ENCODE measurements at regions of chr6 and their contacts with region 1.

Region 1: GRCh38 chr6:30453508-30454116 is 35.7 kb upstream of the HLA-E start:
- DNase-seq: peak; percentile 81
- H3K4me3 Mint-ChIP-seq: no peak overlapping the region
- H3K27ac Mint-ChIP-seq: no peak overlapping the region
- H3K4me1 Mint-ChIP-seq: peaks cover 30% of the 10 kb centered on the region
- H3K27me3 Mint-ChIP-seq: peaks cover 87% of the 10 kb centered on the region

Region 2: DNA sequence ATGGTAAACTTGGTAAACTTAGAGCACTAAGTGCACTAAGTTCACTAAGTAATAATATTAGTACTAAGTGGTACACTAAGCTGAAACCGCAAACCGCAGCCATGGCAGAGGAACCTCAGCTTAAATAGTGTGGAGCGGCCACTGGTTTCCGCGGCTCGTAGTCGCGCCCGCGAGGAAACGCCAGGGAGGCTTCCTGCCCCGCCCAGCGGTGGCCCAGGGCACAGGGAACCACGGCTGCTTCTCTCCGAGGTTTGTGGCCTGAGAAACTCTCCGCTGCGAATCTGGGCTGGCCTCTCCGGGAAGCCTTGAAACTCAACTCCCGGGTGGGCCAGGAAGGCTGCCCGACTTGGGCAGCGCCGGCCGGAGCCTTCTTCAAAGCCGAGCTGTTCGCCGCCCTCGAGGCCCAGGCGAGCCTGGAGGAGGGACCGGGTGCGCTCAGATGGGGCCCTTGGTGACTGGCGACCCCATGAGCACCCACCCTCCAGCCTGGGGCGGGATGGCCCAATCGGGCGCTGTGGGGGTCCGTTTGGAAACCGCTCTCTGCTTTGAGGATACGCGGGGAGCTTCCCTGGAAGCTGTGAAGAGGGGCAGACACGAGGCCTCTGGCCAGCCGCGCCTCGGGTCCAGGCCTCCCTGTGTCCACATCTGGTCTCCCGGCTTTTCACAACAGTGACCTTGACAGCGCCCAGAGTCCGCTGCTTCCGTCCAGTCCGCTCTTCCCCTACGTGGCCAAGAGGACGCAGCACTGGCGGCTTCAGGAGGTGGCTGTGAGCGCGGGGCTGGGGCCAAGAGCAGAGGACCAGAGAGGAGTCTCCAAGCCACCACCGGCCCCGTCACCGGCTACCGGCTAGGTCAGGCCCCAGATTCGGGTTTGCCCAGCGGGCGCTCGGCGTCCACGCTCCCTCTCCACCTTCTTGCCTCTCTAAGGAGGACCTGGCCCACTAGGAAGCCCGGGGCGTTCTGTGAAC is 10.3 kb after region 1 on chr6:
- CTCF ChIA-PET with region 1: interaction called, 18 read pairs
- POLR2A ChIA-PET with region 1: interaction called, 27 read pairs
- DNase-seq: peak; percentile 83
- H3K4me3 Mint-ChIP-seq: no peak overlapping the region
- H3K27ac Mint-ChIP-seq: no peak overlapping the region
- H3K4me1 Mint-ChIP-seq: peaks cover 37% of the 10 kb centered on the region
- H3K27me3 Mint-ChIP-seq: peaks cover 87% of the 10 kb centered on the region

Region 3: DNA sequence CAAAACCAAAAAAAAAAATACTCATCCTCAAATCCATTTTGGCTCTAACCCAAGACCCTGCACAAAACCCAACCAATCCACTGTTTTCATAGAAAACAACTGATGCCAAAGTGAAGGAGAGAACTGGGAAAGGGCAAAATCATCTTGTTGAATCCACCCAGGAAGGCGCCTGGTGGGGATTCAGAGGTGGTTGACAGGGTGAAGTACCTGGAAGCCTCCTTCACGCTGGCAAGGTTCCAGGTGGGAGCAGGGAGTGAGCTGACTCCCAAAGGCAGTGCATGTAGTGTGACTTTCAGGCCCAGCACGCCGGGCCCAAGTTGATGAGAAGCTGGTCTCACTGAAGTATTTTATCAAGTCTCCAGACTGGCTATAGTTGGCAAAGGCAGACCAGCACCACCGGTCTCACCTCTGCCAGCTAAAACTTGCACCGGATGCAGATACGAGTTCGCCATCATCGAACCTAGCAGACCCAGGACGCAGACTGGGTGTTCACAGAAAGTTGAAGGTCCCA is 146.9 kb after region 1 on chr6:
- CTCF ChIA-PET with region 1: interaction called, 13 read pairs
- POLR2A ChIA-PET with region 1: no interaction called
- DNase-seq: no peak
- H3K4me3 Mint-ChIP-seq: no peak overlapping the region
- H3K27ac Mint-ChIP-seq: no peak overlapping the region
- H3K4me1 Mint-ChIP-seq: peaks cover 22% of the 10 kb centered on the region
- H3K27me3 Mint-ChIP-seq: no peaks in the 10 kb centered on the region